WTC11 (cell line): ENCODE measurements at regions of chr11 and their contacts with region 1.

Region 1: DNA sequence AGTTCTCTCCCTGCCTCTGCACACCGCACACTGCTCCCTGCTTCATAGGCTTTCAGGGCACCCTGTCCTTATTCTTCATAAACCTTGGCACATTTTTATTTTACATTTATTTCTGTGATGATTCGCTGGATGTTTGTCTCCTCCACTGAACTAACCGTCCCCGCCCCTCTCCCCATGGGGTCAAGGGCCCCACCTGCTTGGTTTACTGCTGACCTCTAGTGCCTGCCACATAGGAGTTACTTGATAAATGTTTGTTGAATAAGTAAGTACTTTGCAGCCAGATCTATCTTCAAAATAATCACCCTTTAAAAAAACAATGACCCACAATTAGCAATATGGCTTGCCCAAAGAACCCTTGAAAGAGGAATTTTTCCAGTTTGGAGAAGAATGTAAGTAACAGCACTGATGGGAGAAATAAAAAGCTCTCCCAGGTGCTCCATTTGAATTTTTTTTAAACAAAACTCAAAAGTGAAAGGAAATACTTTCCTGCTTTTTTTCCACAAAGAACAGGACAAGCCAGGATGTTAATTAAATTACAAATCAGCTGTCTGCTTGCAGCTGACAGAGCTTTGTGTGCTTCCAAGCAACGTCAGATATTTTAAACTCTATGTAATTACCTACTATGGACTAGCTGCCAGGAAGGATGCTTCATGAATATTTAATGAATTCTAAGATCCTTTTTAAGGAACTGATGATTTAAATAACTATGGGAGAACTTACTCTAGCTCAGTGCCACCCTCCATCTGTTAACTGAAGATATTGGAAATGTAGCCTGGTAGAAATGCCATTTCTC is 1083.6 kb downstream of the DLG2 start:
- DNase-seq: peak; percentile 80
- ATAC-seq: peak; percentile 95
- H3K4me3 Mint-ChIP-seq: peak overlapping the region; percentile 55
- H3K27ac Mint-ChIP-seq: peak overlapping the region; percentile 91
- H3K4me1 Mint-ChIP-seq: peaks cover 43% of the 10 kb centered on the region
- H3K27me3 Mint-ChIP-seq: no peaks in the 10 kb centered on the region
- CTCF ChIP-seq: no peak

Region 2: DNA sequence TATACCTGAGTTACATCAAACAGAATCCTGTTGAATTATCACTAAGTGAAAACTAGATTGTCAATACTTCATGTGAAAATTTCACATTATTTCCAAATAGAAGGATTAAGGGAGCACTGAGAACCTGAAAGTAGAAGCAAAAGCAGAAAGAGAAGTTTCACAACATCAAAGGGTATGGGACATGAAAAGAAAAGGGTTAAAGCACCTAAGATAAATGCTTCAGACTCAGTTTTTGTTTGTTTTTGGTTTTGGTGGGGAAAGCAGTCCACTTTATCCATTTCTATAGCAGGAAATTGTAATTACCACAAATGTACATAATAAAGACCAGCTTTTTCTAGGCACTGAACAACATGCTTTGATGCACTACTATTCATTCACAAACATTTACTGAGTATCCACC is 187.7 kb before region 1 on chr11:
- CTCF ChIA-PET with region 1: no interaction called
- POLR2A ChIA-PET with region 1: no interaction called
- DNase-seq: no peak
- ATAC-seq: no peak
- H3K4me3 Mint-ChIP-seq: no peak overlapping the region
- H3K27ac Mint-ChIP-seq: no peak overlapping the region
- H3K4me1 Mint-ChIP-seq: peaks cover 8% of the 10 kb centered on the region
- H3K27me3 Mint-ChIP-seq: no peaks in the 10 kb centered on the region
- CTCF ChIP-seq: no peak

Region 3: DNA sequence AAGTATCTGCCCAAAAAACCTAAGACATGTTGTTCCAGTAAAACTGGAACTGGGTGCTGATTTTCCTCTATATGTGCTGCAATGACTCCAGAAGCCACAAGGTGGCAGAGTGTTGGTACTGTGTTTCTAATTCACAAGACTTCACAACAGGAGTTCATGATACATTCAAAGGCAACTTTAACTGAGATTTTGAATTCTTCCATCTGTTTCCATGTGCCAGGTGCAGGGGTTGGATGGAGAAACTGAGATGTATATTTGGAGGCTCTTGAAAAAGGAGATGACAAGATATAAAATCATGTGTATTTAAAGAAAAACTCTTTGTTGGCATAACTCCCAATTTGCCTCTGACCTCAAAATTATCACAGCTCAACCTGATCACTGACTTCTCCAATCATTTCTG is 158.8 kb before region 1 on chr11:
- CTCF ChIA-PET with region 1: interaction called, 22 read pairs
- POLR2A ChIA-PET with region 1: no interaction called
- DNase-seq: peak; percentile 56
- ATAC-seq: peak; percentile 44; the same call in 1 of the 2 replicates
- H3K4me3 Mint-ChIP-seq: no peak overlapping the region
- H3K27ac Mint-ChIP-seq: no peak overlapping the region
- H3K4me1 Mint-ChIP-seq: 0 out of 2 replicates have a peak, but pooled peaks cover 5% of the 10 kb centered on the region
- H3K27me3 Mint-ChIP-seq: no peaks in the 10 kb centered on the region
- CTCF ChIP-seq: peak; percentile 60; the same call in 1 of the 2 replicates

Region 4: GRCh38 chr11:84390441-84391078 is 153.0 kb before region 1 on chr11:
- CTCF ChIA-PET with region 1: interaction called, 17 read pairs
- POLR2A ChIA-PET with region 1: no interaction called
- DNase-seq: peak; percentile 43
- ATAC-seq: peak; percentile 99
- H3K4me3 Mint-ChIP-seq: no peak overlapping the region
- H3K27ac Mint-ChIP-seq: peak overlapping the region; percentile 64
- H3K4me1 Mint-ChIP-seq: peaks cover 18% of the 10 kb centered on the region
- H3K27me3 Mint-ChIP-seq: no peaks in the 10 kb centered on the region
- CTCF ChIP-seq: peak; percentile 18; the same call in 1 of the 2 replicates

Region 5: GRCh38 chr11:84398017-84398626 is 145.4 kb before region 1 on chr11:
- CTCF ChIA-PET with region 1: interaction called, 13 read pairs
- POLR2A ChIA-PET with region 1: no interaction called
- DNase-seq: peak; percentile 21
- ATAC-seq: peak; percentile 73
- H3K4me3 Mint-ChIP-seq: no peak overlapping the region
- H3K27ac Mint-ChIP-seq: no peak overlapping the region
- H3K4me1 Mint-ChIP-seq: peaks cover 10% of the 10 kb centered on the region
- H3K27me3 Mint-ChIP-seq: no peaks in the 10 kb centered on the region
- CTCF ChIP-seq: no peak; the same call in 1 of the 2 replicates

Region 6: DNA sequence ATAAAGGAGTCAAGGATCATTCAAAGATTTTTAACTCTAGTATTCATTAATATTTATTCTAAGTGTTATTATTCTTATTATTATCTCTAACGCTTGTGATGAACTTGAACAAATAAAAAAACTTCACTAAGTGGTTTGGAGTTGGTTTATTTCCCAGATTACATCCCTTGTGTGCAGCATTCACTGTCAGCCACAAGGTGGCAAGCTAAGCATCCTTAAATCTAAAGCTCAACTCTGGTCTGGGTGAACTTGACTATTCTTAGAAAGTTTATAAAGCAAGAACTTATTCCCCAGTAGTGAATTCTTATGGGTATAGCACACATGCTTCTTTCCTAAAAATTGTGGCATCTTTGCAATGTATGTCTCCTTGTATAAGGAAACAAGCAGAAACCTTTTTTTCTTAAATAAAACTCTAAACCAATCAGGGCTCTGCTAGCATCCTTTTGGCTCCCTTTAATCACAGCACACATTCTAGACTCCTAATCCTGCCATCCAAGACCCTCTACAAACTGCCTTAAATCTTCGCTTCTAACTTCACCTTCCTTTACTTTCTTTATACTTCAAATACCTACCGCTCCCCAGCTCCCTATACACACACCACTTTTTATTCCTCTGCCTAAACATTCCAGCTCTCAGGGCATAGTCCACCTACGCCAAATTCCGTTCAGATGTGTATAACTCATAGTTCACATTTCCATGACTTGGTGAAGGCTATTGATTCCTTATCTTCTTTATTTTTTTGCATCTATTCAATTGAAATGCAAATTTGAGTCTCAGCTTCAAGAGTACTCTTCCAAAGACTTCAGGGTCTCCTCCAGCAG is 14.7 kb after region 1 on chr11:
- CTCF ChIA-PET with region 1: interaction called, 20 read pairs
- POLR2A ChIA-PET with region 1: no interaction called
- DNase-seq: peak; percentile 33
- ATAC-seq: peak; percentile 93
- H3K4me3 Mint-ChIP-seq: no peak overlapping the region
- H3K27ac Mint-ChIP-seq: no peak overlapping the region
- H3K4me1 Mint-ChIP-seq: peaks cover 4% of the 10 kb centered on the region
- H3K27me3 Mint-ChIP-seq: no peaks in the 10 kb centered on the region
- CTCF ChIP-seq: peak; percentile 69